Activated CD4-positive, alpha-beta memory T cell treated with anti-CD3 and anti-CD28 coated beads for 36 hours (primary cell): ENCODE measurements at regions of chr19 and their contacts with region 1.

Region 1: DNA sequence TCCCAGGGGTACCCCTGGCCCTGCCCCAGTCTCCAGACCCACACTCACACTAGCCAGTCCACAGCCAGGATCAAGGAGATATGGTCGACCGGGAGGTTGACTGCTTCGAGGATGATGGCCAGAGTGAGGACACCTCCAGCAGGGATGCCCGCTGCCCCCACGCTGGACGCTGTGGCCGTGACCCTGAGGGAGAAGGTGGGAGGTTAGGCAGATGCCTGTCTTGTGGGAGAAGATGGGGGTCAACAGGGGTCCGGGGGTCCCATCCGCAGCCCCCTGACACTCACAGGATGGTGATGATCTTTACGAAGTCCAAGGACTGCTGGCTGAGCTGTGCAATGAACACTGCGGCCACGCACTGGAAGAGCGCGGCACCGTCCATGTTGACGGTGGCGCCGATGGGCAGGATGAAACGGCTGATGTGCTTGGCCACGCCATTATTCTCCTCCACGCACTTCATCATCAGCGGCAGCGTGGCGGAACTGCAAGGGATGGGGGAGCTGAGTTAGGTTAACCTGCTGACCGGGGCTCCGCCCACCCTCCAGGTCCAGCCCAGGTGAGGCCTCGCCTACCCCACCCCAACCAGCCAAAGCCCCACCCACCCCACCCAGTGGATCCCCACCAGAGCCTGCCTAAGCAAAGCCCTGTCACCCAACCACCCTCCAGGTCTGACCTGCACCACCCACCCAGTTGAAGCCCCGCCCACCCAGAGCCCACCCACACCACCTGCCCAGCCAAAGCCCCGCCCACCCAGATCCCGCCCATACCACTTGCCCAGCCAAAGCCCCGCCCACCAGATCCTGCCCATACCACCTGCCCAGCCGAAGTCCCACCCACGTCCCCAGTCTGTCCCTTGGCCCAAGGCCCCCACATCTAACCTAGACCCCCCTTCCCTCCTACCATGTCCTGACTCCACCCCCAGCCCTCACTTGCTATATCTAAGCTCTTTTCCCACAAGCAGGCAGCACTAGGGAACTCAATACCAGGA is 11.2 kb downstream of the SLC1A5 start:
- DNase-seq: peak; percentile 34
- H3K4me3 Mint-ChIP-seq: no peak overlapping the region
- H3K27ac Mint-ChIP-seq: peak overlapping the region; percentile 33
- H3K4me1 Mint-ChIP-seq: peaks cover 12% of the 10 kb centered on the region
- H3K27me3 Mint-ChIP-seq: no peaks in the 10 kb centered on the region

Region 2: GRCh38 chr19:46766569-46767317 is 10.5 kb before region 1 on chr19:
- CTCF ChIA-PET with region 1: interaction called, 8 read pairs
- POLR2A ChIA-PET with region 1: interaction called, 3 read pairs
- intact Hi-C with region 1: loop called (anchors 1 kb)
- DNase-seq: peak; percentile 76
- H3K4me3 Mint-ChIP-seq: no peak overlapping the region
- H3K27ac Mint-ChIP-seq: no peak overlapping the region
- H3K4me1 Mint-ChIP-seq: peaks cover 2% of the 10 kb centered on the region
- H3K27me3 Mint-ChIP-seq: no peaks in the 10 kb centered on the region

Region 3: DNA sequence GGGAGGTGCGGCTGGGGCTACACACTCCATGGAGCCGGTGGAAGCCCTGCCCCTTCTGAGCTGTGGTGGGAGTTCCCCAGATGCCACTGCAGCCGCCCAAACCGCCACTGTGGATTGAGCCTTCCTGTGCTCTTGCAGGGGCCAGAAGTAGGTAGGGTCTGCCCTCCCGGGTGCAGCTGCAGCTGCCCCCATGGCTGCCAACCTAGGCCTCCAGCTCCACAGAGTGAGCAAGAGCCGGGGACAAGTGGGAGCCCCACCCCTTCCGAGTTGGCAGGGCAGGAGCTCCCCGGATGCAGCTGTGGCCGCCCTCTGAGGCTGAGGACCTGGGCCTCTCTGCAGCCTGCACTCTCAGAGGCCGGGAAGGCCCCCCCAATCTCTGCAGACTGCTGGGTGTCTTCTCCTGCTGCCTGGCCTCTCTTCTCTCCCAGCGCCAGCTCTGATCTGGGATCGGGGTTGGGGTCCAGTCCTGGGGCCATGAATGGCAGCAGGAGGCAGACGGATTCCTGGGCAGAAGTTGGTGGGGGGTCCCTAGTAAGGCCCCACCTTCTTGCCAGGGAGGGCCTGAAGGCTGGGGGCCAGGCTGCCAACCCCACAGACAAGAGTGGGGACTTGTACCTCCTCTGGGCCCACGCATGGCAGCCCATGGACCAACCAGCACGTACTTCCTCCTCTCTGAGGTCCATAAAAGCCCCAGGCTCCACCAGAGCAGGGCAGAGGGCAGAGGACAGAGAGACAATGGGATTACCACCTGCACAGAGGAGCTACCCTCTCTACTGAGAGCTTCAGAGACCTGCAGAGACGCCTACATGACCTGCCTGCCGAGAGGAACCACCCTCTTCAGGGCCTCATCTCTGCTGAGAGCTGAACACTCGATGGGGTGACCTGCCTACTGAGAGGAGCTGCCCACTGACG is 44.5 kb after region 1 on chr19:
- CTCF ChIA-PET with region 1: no interaction called
- POLR2A ChIA-PET with region 1: no interaction called
- intact Hi-C with region 1: no loop called
- DNase-seq: peak; percentile 81
- H3K4me3 Mint-ChIP-seq: peak overlapping the region; percentile 26
- H3K27ac Mint-ChIP-seq: peak overlapping the region; percentile 65
- H3K4me1 Mint-ChIP-seq: peaks cover 33% of the 10 kb centered on the region
- H3K27me3 Mint-ChIP-seq: no peaks in the 10 kb centered on the region